ENCODE measurements at regions of chr16 and their contacts with region 1.

Region 1: GRCh38 chr16:11484691-11485258 is 101.9 kb downstream of the LITAF start:
- DNase-seq: no peak
- H3K4me3 ChIP-seq: no peak overlapping the region
- H3K27ac ChIP-seq: no peak overlapping the region
- H3K4me1 ChIP-seq: no peaks in the 10 kb centered on the region
- H3K27me3 ChIP-seq: no peaks in the 10 kb centered on the region
- CTCF ChIP-seq: no peak
- EP300 ChIP-seq: no peak
- POLR2A ChIP-seq: no peak

Region 2: GRCh38 chr16:11423315-11424117 is 61.3 kb before region 1 on chr16:
- intact Hi-C with region 1: loop called (anchors 10 kb)
- DNase-seq: no peak
- H3K4me3 ChIP-seq: no peak overlapping the region
- H3K27ac ChIP-seq: no peak overlapping the region
- H3K4me1 ChIP-seq: no peaks in the 10 kb centered on the region
- H3K27me3 ChIP-seq: peaks cover 0 to 3% (median 0%) of the 10 kb centered on the region in 4 donors
- CTCF ChIP-seq: no peak
- EP300 ChIP-seq: no peak
- POLR2A ChIP-seq: no peak

Region 3: DNA sequence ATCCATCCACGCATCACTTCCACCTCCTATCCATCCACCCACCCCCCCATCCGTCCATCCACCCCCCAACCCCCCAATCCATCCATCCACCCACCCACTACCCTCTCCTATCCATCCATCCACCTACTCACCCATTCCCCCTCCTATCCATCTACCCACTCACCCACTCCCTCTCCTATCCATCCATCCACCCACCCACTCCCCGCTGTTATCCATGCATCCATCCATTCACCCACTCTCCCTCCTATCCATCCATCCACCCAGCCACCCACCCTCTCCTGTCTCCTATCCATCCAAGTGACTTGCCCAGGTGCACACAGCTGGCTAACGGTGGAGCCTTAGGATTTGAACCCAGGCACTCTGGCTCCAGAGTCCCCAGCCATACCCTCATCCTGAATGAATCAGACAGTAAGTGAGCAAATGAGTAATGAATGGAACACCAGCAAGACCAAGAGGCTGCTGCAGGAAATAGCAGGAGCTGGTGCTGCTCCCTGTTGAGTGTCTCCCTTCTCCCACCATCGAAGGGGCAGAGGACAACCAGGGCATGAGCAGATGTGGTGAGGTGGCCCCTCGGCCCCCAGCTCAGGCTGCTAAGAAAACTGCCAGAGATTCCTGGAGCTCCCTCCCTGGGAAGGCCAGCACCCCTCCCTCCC is 39.4 kb after region 1 on chr16:
- intact Hi-C with region 1: no loop called
- DNase-seq: no peak
- H3K4me3 ChIP-seq: no peak overlapping the region
- H3K27ac ChIP-seq: no peak overlapping the region
- H3K4me1 ChIP-seq: peaks cover 0 to 6% (median 0%) of the 10 kb centered on the region in 4 donors
- H3K27me3 ChIP-seq: peaks cover 0 to 26% (median 0%) of the 10 kb centered on the region in 4 donors
- CTCF ChIP-seq: no peak
- EP300 ChIP-seq: no peak
- POLR2A ChIP-seq: no peak

Region 4: DNA sequence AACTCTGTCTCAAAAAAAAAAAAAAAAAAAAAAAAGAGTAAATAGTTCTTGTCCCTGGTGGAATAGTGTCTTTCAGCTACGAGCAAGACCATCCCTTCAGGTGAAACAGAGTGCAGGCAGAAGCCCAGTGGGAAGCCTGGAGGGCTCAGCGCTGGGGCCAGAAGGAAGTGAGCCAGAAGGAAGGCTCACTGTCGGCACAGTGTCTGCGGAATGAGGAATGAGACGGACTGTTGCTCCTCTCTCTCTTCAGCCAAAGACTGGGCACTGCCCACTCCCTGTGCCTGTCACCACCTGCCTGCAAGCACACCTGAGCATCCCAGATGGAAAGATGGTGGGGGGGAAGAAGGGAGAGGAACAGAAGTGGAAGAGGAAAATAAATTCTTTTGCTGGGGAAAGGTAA is 359.1 kb after region 1 on chr16:
- intact Hi-C with region 1: no loop called
- DNase-seq: no peak
- H3K4me3 ChIP-seq: no peak overlapping the region
- H3K27ac ChIP-seq: no peak overlapping the region
- H3K4me1 ChIP-seq: peaks cover 1 to 13% (median 10%) of the 10 kb centered on the region in 4 donors
- H3K27me3 ChIP-seq: no peaks in the 10 kb centered on the region
- CTCF ChIP-seq: no peak
- EP300 ChIP-seq: no peak
- POLR2A ChIP-seq: no peak

Measured in esophagus muscularis mucosa (tissue), 4 donors.